Prostate gland (tissue), 2 donors: ENCODE measurements at regions of chr20 and their contacts with region 1.

Region 1: GRCh38 chr20:19588732-19589131 is 169.3 kb upstream of the RIN2 start:
- DNase-seq: peak; percentile 62
- H3K4me3 ChIP-seq: no peak overlapping the region
- H3K27ac ChIP-seq: no peak overlapping the region
- H3K4me1 ChIP-seq: no peaks in the 10 kb centered on the region
- H3K27me3 ChIP-seq: no peaks in the 10 kb centered on the region
- CTCF ChIP-seq: peak in 1 of 4 experiments; percentile 52
- POLR2A ChIP-seq: no peak

Region 2: DNA sequence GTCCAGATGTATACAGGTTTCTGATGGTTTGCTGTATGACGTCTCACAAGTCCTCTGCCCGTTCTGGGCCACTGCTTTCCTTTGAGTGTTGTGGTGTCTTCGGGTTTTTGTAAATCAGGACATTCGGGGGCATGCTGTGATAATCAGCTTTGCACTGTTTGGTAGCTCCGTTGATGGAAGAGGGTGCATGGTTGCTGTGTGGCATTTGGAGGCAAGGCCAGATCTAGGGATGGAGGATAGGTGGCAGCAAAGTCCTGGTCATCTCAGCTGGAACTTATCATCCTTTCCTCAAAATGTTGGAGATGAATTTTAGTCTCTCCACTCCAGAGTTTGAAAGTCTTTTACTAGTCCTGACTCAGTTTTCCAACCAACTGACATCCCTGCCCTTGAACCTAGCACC is 684.1 kb before region 1 on chr20:
- intact Hi-C with region 1: loop called (anchors 5 kb)
- DNase-seq: no peak
- H3K4me3 ChIP-seq: no peak overlapping the region
- H3K27ac ChIP-seq: no peak overlapping the region
- H3K4me1 ChIP-seq: no peaks in the 10 kb centered on the region
- H3K27me3 ChIP-seq: no peaks in the 10 kb centered on the region
- CTCF ChIP-seq: peak in 2 of 4 experiments; percentile 23 to 32
- POLR2A ChIP-seq: no peak

Region 3: GRCh38 chr20:19205977-19206396 is 382.7 kb before region 1 on chr20:
- intact Hi-C with region 1: loop called (anchors 2 kb)
- DNase-seq: peak; percentile 62
- H3K4me3 ChIP-seq: no peak overlapping the region
- H3K27ac ChIP-seq: no peak overlapping the region
- H3K4me1 ChIP-seq: no peaks in the 10 kb centered on the region
- H3K27me3 ChIP-seq: no peaks in the 10 kb centered on the region
- CTCF ChIP-seq: peak; percentile 84 to 96 (median 90)
- POLR2A ChIP-seq: no peak

Region 4: GRCh38 chr20:19735446-19735845 is 146.7 kb after region 1 on chr20:
- intact Hi-C with region 1: no loop called
- DNase-seq: peak; percentile 15
- H3K4me3 ChIP-seq: no peak overlapping the region
- H3K27ac ChIP-seq: no peak overlapping the region
- H3K4me1 ChIP-seq: no peaks in the 10 kb centered on the region
- H3K27me3 ChIP-seq: no peaks in the 10 kb centered on the region
- CTCF ChIP-seq: no peak
- POLR2A ChIP-seq: no peak